Activated naive CD4-positive, alpha-beta T cell treated with anti-CD3 and anti-CD28 coated beads for 36 hours (primary cell): ENCODE measurements at regions of chr21 and their contacts with region 1.

Region 1: DNA sequence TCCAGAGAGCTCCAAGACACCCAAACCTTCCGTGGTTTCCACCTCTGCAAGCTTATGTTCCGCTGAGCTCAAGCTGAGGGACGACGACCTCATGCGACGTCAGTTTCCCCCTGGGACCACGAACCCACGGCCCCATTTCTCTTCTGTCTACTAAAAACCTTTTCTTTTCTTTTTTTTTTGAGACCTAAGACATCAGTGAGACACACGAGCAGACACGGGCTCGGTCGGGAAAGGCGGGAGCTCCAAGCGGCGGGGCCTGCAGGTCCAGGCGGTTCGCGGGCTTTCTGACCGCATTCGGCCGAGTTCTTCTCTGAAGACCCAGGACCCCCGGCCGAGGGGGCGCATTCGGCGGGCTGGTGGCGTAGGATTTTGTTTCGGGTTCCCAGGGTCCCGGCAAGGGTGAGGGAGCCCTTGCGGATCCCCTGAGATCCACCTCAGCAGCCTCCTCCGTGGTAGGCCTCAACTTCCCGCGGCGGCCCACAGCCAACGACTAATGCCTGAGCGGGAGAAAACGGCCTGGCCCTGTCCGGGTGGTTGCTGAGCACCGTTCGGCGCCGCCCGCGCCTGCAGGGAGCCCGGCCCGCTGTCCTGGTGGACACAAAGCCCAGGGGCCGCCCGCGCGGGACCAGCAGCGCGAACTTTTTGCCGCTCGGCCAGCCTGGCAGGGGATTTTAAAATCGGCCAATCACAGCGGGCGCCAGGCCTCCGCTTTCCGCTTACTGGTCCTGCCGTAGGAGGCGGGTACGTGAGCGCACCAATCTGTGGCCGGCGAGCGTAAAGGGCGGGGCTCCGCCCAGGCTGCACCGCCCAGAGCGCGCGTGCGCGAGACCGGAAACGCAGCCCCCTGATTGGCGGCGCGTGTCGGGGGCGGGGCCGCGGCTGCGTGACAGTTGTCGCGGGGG is at the start of gene C21orf58:
- DNase-seq: peak; percentile 97
- H3K4me3 Mint-ChIP-seq: peak within 1 kb of the TSS; percentile 96
- H3K27ac Mint-ChIP-seq: peak within 1 kb of the TSS; percentile 97
- H3K4me1 Mint-ChIP-seq: peaks cover 28% of the 10 kb centered on the region
- H3K27me3 Mint-ChIP-seq: no peaks in the 10 kb centered on the region
- total RNA-seq, gene C21orf58: 23.9 to 24.2 TPM

Region 2: GRCh38 chr21:45643021-45643980 is 680.2 kb before region 1 on chr21 and contains the start of gene PCBP3:
- CTCF ChIA-PET with region 1: no interaction called
- intact Hi-C with region 1: loop called (anchors 2 kb)
- DNase-seq: peak; percentile 99
- H3K4me3 Mint-ChIP-seq: peak within 1 kb of the TSS; percentile 76
- H3K27ac Mint-ChIP-seq: no peak within 1 kb of the TSS
- H3K4me1 Mint-ChIP-seq: peaks cover 46% of the 10 kb centered on the region
- H3K27me3 Mint-ChIP-seq: peaks cover 5% of the 10 kb centered on the region
- total RNA-seq, gene PCBP3: 10.0 to 10.2 TPM

Region 3: DNA sequence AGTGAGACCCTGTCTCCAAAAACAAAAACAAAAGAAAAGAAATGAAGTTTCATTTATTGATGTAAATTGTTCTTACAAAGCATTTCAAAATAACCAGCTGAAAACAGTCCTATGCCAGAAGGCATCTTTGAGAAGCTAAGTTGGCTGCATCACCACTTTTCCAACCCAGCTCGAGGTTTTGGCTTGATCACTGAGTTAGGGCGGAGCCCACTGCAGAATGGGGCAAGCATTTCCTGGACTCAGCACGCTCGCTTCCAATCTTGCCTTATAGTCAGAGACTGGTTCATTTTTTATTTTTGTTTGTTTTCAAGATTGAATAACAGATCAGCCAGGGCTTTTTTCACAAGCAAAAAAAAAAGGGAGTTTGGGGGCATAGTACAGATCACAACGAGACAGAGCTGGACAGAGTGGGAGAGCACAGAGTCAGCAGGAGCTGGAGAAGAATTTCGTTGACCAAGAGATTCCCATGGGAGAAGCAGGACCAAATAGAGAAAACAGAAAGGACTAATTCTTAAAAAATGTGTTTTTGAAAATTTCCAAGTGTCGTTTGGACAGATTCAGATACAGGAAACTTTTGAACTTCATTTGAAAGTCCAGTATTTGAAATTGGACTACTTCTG is 365.4 kb before region 1 on chr21:
- CTCF ChIA-PET with region 1: no interaction called
- intact Hi-C with region 1: no loop called
- DNase-seq: no peak
- H3K4me3 Mint-ChIP-seq: no peak overlapping the region
- H3K27ac Mint-ChIP-seq: no peak overlapping the region
- H3K4me1 Mint-ChIP-seq: no peaks in the 10 kb centered on the region
- H3K27me3 Mint-ChIP-seq: peaks cover 8% of the 10 kb centered on the region

Region 4: GRCh38 chr21:46144464-46145070 is 178.9 kb before region 1 on chr21:
- CTCF ChIA-PET with region 1: interaction called, 10 read pairs
- intact Hi-C with region 1: loop called (anchors 1 kb)
- DNase-seq: no peak
- H3K4me3 Mint-ChIP-seq: no peak overlapping the region
- H3K27ac Mint-ChIP-seq: peak overlapping the region; percentile 76
- H3K4me1 Mint-ChIP-seq: peaks cover 13% of the 10 kb centered on the region
- H3K27me3 Mint-ChIP-seq: no peaks in the 10 kb centered on the region

Region 5: GRCh38 chr21:46253610-46254124 is 69.8 kb before region 1 on chr21:
- CTCF ChIA-PET with region 1: no interaction called
- intact Hi-C with region 1: loop called (anchors 2 kb)
- DNase-seq: peak; percentile 82
- H3K4me3 Mint-ChIP-seq: no peak overlapping the region
- H3K27ac Mint-ChIP-seq: peak overlapping the region; percentile 86
- H3K4me1 Mint-ChIP-seq: peaks cover 34% of the 10 kb centered on the region
- H3K27me3 Mint-ChIP-seq: no peaks in the 10 kb centered on the region

Region 6: GRCh38 chr21:46295996-46296752 is 27.3 kb before region 1 on chr21:
- CTCF ChIA-PET with region 1: no interaction called
- intact Hi-C with region 1: loop called (anchors 2 kb)
- DNase-seq: peak; percentile 82
- H3K4me3 Mint-ChIP-seq: peak overlapping the region; percentile 62
- H3K27ac Mint-ChIP-seq: peak overlapping the region; percentile 73
- H3K4me1 Mint-ChIP-seq: peaks cover 18% of the 10 kb centered on the region
- H3K27me3 Mint-ChIP-seq: no peaks in the 10 kb centered on the region

Region 7: GRCh38 chr21:46414965-46415275 is 91.4 kb after region 1 on chr21:
- CTCF ChIA-PET with region 1: no interaction called
- intact Hi-C with region 1: no loop called
- DNase-seq: no peak
- H3K4me3 Mint-ChIP-seq: no peak overlapping the region
- H3K27ac Mint-ChIP-seq: no peak overlapping the region
- H3K4me1 Mint-ChIP-seq: no peaks in the 10 kb centered on the region
- H3K27me3 Mint-ChIP-seq: no peaks in the 10 kb centered on the region

Region 8: GRCh38 chr21:46425571-46425970 is 102.1 kb after region 1 on chr21:
- CTCF ChIA-PET with region 1: no interaction called
- intact Hi-C with region 1: no loop called
- DNase-seq: peak; percentile 66
- H3K4me3 Mint-ChIP-seq: no peak overlapping the region
- H3K27ac Mint-ChIP-seq: peak overlapping the region; percentile 84
- H3K4me1 Mint-ChIP-seq: peaks cover 17% of the 10 kb centered on the region
- H3K27me3 Mint-ChIP-seq: no peaks in the 10 kb centered on the region

Region 9: GRCh38 chr21:46458315-46459023 is 135.0 kb after region 1 on chr21 and contains the start of gene DIP2A:
- CTCF ChIA-PET with region 1: interaction called, 3 read pairs
- intact Hi-C with region 1: loop called (anchors 1 kb)
- DNase-seq: peak; percentile 94
- H3K4me3 Mint-ChIP-seq: peak within 1 kb of the TSS; percentile 83
- H3K27ac Mint-ChIP-seq: peak within 1 kb of the TSS; percentile 86
- H3K4me1 Mint-ChIP-seq: peaks cover 36% of the 10 kb centered on the region
- H3K27me3 Mint-ChIP-seq: no peaks in the 10 kb centered on the region
- total RNA-seq, gene DIP2A: 31.4 to 32.7 TPM

Region 10: DNA sequence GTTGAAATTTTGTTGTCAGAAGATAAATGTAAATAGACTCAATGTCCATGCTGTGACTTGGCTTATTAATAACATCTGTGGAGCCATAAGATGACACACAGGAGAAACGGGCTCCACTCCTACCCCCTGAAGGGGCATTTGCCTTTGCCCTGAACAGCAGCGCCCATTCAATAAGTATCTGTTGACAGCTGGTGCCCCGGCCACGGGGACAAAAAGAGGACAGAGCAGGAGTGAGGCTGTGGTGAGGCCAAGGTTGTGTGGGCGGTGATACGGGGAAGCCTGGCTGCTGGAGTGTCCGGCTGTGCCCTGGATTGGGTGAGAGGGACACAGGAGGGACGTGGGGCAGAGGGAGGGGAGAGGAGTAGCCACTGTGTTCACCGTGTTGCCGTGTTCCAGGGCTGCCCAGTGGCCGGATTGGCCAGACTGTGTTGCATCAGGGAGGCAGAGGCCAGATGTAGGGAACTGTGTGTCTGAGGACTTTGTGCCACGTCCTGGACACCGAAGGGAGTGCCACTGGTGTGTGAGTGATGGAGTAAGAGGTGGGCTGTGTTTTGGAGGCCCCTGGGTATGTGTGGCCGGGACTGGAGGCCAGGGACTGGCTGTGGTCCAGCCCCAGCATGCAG is 327.1 kb after region 1 on chr21:
- CTCF ChIA-PET with region 1: no interaction called
- intact Hi-C with region 1: no loop called
- DNase-seq: no peak
- H3K4me3 Mint-ChIP-seq: no peak overlapping the region
- H3K27ac Mint-ChIP-seq: peak overlapping the region; percentile 16
- H3K4me1 Mint-ChIP-seq: peaks cover 22% of the 10 kb centered on the region
- H3K27me3 Mint-ChIP-seq: no peaks in the 10 kb centered on the region